MCF 10A (cell line): ENCODE measurements at regions of chr5 and their contacts with region 1.

Region 1: DNA sequence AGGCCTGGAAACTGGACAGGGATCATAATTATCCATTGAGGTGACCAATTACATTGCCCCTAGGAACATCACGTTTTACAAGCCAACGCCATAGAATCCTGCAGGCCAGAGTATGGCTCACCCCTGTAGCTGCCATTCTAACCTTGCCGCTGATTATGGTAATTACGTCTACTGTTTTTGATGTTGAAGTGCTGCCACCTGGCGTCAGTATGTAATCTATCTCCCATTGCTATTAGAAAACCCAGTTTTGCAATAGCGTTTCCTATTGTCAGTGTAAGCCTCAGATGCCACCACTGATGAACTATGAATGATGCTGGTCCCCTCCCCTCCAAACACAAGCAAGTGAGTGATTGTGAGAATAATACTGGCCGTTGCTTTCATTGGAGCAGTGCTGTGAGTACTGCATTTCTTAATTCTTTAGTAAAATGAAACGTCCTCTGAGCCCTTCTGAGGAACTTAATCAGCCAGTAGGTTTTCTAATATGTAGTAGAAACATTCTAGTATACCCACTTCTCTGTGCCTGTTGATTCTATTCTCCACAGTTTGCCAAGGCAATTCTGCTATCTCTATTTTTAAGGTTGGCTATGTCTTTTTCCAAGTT is 100.5 kb upstream of the NMUR2 start:
- DNase-seq: peak; percentile 81
- H3K4me3 Mint-ChIP-seq: no peak overlapping the region
- H3K27ac Mint-ChIP-seq: no peak overlapping the region
- H3K4me1 Mint-ChIP-seq: no peaks in the 10 kb centered on the region
- H3K27me3 Mint-ChIP-seq: peaks cover 33% of the 10 kb centered on the region
- CTCF ChIP-seq: peak; percentile 68

Region 2: GRCh38 chr5:152379331-152379730 is 126.2 kb before region 1 on chr5:
- CTCF ChIA-PET with region 1: interaction called, 7 read pairs
- POLR2A ChIA-PET with region 1: interaction called, 3 read pairs
- intact Hi-C with region 1: loop called (anchors 2 kb)
- DNase-seq: no peak
- H3K4me3 Mint-ChIP-seq: no peak overlapping the region
- H3K27ac Mint-ChIP-seq: no peak overlapping the region
- H3K4me1 Mint-ChIP-seq: no peaks in the 10 kb centered on the region
- H3K27me3 Mint-ChIP-seq: peaks cover 14% of the 10 kb centered on the region
- CTCF ChIP-seq: no peak

Region 3: GRCh38 chr5:152488869-152489268 is 16.7 kb before region 1 on chr5:
- CTCF ChIA-PET with region 1: interaction called, 18 read pairs
- POLR2A ChIA-PET with region 1: no interaction called
- intact Hi-C with region 1: no loop called
- DNase-seq: no peak
- H3K4me3 Mint-ChIP-seq: no peak overlapping the region
- H3K27ac Mint-ChIP-seq: no peak overlapping the region
- H3K4me1 Mint-ChIP-seq: no peaks in the 10 kb centered on the region
- H3K27me3 Mint-ChIP-seq: no peaks in the 10 kb centered on the region
- CTCF ChIP-seq: no peak